Caco-2 (cell line): ENCODE measurements at regions of chr20 and their contacts with region 1.

Region 1: DNA sequence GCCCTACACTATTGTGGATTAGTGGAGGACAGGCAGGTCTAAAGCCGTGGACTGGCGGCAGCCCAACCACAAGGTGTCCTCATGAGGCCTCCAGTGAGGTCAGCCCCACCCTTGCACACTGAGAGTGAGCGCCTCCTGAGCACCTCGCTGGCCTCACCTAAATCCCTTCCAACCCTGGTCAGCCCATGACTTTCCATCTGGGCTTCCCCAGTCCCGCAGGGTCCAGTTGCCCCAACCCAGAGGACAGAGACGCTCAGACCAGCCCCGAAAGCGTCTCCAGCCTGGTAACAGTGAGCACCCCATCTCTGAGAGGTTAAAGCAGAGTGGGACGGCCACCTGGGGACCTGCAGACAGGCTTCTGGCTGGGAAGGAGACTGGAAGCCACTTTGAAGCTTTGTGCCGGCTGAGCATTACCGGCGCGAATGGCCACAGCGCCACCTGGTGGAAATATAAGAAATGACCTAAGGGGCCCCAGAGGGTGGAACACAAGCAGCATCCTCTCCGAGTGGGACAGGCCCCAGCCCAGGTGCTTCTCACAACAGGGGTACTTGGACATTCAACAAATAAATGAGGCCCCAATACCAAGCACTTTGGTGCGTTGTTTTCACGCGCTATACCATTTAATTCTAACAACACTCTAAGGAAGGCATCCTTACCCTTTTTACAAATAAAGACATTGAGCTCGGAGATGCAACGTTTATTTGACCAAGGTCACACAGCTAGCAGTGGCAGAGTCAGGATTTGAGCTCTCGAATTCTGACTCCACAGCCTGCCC is 65.7 kb upstream of the TOP1 start:
- DNase-seq: peak; percentile 91 to 96
- H3K4me3 ChIP-seq: peak overlapping the region; percentile 28
- H3K4me3 Mint-ChIP-seq: peak overlapping the region; percentile 53
- H3K27ac Mint-ChIP-seq: no peak overlapping the region
- H3K4me1 ChIP-seq: peaks cover 11% of the 10 kb centered on the region
- H3K4me1 Mint-ChIP-seq: peaks cover 10% of the 10 kb centered on the region
- H3K27me3 ChIP-seq: no peaks in the 10 kb centered on the region
- H3K27me3 Mint-ChIP-seq: peaks cover 3% of the 10 kb centered on the region
- CTCF ChIP-seq: peak; percentile 96 to 99

Region 2: GRCh38 chr20:40160097-40160550 is 802.8 kb before region 1 on chr20:
- CTCF ChIA-PET with region 1: no interaction called
- POLR2A ChIA-PET with region 1: no interaction called
- intact Hi-C with region 1: loop called (anchors 1 kb)
- DNase-seq: peak; percentile 80 to 84
- H3K4me3 ChIP-seq: no peak overlapping the region
- H3K4me3 Mint-ChIP-seq: peak overlapping the region; percentile 22
- H3K27ac Mint-ChIP-seq: no peak overlapping the region
- H3K4me1 ChIP-seq: no peaks in the 10 kb centered on the region
- H3K4me1 Mint-ChIP-seq: no peaks in the 10 kb centered on the region
- H3K27me3 ChIP-seq: no peaks in the 10 kb centered on the region
- H3K27me3 Mint-ChIP-seq: peaks cover 3% of the 10 kb centered on the region
- CTCF ChIP-seq: peak; percentile 98 to 99

Region 3: GRCh38 chr20:40741507-40742106 is 221.3 kb before region 1 on chr20:
- CTCF ChIA-PET with region 1: interaction called, 47 read pairs
- POLR2A ChIA-PET with region 1: no interaction called
- intact Hi-C with region 1: loop called (anchors 1 kb)
- DNase-seq: peak; percentile 74 to 82
- H3K4me3 ChIP-seq: no peak overlapping the region
- H3K4me3 Mint-ChIP-seq: no peak overlapping the region
- H3K27ac Mint-ChIP-seq: no peak overlapping the region
- H3K4me1 ChIP-seq: no peaks in the 10 kb centered on the region
- H3K4me1 Mint-ChIP-seq: no peaks in the 10 kb centered on the region
- H3K27me3 ChIP-seq: no peaks in the 10 kb centered on the region; the same call in 1 of the 2 replicates
- H3K27me3 Mint-ChIP-seq: peaks cover 35% of the 10 kb centered on the region
- CTCF ChIP-seq: peak; percentile 91 to 96

Region 4: DNA sequence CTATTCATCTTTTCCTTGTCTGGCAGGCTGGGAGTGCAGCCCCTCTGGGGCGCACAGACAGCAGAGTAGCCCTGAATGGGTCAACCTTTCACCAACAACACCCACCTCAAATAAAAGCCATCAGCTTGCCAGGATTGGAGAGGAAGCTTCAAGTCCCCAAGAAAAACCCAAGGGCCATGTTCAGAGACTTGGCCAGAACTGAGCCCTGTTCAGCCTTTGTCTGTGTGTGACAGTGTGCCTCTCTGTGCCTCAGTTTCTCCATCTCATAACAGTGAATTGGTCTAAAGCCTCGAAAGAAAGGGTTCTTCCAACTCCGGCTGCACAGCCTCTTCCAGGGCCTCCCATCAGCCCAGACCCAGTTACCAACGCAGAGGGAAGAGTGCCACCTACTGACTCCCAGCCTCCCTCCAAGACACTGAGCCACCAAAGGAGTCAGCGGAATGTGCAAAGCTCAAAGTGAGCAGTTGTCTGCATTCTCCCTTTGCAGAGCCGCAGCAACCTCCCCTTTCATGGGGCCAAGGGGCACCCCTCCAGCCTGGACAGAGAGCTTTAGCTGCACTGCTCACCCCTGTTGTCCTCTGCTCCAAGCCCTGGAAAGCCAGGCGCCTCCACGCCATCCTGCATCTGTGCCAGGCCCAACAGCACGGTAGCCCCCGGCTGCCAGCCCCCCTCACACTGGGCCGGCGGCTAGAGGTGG is 17.0 kb before region 1 on chr20:
- CTCF ChIA-PET with region 1: interaction called, 34 read pairs
- POLR2A ChIA-PET with region 1: no interaction called
- intact Hi-C with region 1: no loop called
- DNase-seq: peak; percentile 82 to 86
- H3K4me3 ChIP-seq: no peak overlapping the region
- H3K4me3 Mint-ChIP-seq: no peak overlapping the region
- H3K27ac Mint-ChIP-seq: no peak overlapping the region
- H3K4me1 ChIP-seq: peaks cover 8% of the 10 kb centered on the region
- H3K4me1 Mint-ChIP-seq: no peaks in the 10 kb centered on the region
- H3K27me3 ChIP-seq: no peaks in the 10 kb centered on the region
- H3K27me3 Mint-ChIP-seq: peaks cover 19% of the 10 kb centered on the region
- CTCF ChIP-seq: peak; percentile 84 to 99

Region 5: DNA sequence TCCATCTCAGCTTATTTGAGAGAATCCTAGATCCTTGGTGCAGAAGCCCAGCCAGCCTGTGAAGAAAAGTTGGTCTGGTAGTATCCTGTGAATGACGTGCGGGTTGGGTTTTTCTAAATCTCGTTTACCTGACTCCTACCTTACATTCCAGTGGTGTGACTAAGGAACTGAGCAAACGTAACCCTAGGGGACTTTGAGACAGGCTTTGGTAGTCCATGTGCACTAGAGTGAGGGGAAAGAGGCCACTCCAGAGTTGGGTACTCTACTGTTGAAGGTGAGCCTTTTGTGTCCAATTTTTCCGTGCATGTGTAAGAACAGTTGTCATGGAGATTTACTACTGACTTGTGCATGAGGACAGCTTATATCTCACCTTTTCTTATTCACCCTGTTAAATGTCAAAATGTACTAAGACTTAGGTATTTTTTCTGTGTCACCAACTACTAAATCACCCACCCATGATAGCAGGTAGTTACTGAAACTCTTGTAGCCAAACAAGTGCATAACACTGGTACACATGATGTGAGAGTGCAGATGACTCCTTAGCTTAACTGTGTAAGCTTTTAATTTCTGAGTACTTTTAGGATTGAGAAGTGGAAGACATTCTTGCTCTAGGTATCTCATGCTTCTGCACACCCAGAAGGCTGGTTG is 148.1 kb after region 1 on chr20:
- CTCF ChIA-PET with region 1: interaction called, 4 read pairs
- POLR2A ChIA-PET with region 1: no interaction called
- intact Hi-C with region 1: loop called (anchors 1 kb)
- DNase-seq: peak; percentile 88 to 90
- H3K4me3 ChIP-seq: no peak overlapping the region
- H3K4me3 Mint-ChIP-seq: peak overlapping the region; percentile 42
- H3K27ac Mint-ChIP-seq: peak overlapping the region; percentile 91
- H3K4me1 ChIP-seq: peaks cover 30% of the 10 kb centered on the region
- H3K4me1 Mint-ChIP-seq: peaks cover 30% of the 10 kb centered on the region
- H3K27me3 ChIP-seq: no peaks in the 10 kb centered on the region
- H3K27me3 Mint-ChIP-seq: no peaks in the 10 kb centered on the region
- CTCF ChIP-seq: no peak

Region 6: DNA sequence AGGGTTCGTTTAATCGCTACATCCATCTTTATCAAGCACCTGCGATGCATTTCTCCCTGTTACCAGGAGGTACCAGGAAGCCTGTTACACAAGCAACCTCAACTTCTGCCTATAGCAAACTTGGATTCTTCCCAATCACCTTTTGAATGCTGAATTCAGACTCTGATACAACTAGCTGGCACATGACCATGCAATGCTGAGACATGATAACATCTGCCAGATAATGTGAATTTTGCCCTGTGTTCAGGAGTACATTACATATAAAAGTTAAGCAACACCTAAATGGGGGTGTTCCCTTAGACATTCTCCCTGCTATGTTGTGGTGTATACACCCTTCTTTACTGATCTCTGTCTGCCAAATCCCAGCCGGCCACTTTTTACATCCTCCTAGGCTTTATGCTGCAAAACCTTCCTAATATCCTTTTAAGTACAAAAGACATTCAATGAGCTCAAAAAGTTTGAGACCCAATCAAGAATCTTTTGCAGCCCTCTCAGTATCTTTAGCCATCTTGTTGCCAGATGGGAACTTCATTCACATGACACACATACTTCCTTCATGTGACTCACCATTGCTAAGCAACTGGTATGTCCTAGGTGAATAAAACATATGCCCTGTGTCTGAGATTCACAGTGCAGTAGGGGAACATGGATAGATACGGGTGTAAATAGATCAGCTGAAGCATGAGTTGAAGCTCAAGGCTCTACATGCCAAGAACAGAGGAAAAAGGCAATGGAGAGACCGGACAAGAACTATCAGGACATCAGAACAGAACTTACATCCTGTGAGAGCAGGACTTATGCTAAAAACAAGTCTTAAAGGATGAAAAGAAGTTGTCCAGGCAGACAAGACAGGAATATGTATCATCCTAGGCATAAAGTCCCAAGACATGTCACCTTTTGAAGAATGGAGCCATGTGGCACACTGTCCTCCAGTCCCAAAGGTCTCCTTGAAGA is 270.3 kb after region 1 on chr20:
- CTCF ChIA-PET with region 1: interaction called, 8 read pairs
- POLR2A ChIA-PET with region 1: no interaction called
- intact Hi-C with region 1: loop called (anchors 1 kb)
- DNase-seq: no peak
- H3K4me3 ChIP-seq: no peak overlapping the region
- H3K4me3 Mint-ChIP-seq: peak overlapping the region; percentile 39
- H3K27ac Mint-ChIP-seq: peak overlapping the region; percentile 10
- H3K4me1 ChIP-seq: peaks cover 9% of the 10 kb centered on the region
- H3K4me1 Mint-ChIP-seq: peaks cover 9% of the 10 kb centered on the region
- H3K27me3 ChIP-seq: no peaks in the 10 kb centered on the region; the same call in 1 of the 2 replicates
- H3K27me3 Mint-ChIP-seq: no peaks in the 10 kb centered on the region
- CTCF ChIP-seq: no peak